ENCODE measurements at regions of chr2 and their contacts with region 1.

Region 1: DNA sequence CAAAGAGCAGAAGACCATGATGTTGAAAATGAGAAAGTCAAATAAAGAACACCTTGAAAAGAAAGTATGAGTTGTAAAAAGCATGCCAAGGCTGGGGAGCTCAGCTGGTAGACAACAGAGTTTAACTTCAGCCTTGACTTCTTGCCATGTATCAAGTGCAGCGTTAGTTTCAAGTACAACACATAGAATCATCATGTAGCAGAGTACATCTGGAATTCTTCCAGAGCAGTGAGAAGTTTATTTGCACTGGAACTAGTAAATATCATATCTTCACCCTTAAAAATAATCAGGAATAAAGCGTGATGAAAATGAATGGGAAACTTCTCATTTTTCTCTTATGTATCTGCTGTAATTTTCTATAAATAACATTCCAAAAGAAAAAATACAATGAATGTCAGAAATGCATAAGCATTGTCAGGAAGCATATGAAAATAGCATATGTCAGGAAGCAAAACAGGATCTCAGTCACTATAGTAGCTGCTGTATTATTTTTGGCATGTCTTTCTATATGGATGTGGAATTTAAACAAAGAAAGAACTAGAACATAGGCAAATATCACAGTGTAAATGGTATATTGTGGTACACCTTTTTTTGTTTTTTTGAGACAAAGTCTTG is 10.1 kb upstream of the SULT1C4 start:
- DNase-seq: no peak
- H3K4me3 ChIP-seq: no peak overlapping the region
- H3K27ac ChIP-seq: no peak overlapping the region
- H3K27me3 ChIP-seq: no peaks in the 10 kb centered on the region
- CTCF ChIP-seq: no peak

Region 2: GRCh38 chr2:108215794-108216211 is 151.9 kb before region 1 on chr2:
- intact Hi-C with region 1: no loop called
- DNase-seq: no peak
- H3K4me3 ChIP-seq: no peak overlapping the region
- H3K27ac ChIP-seq: no peak overlapping the region
- H3K27me3 ChIP-seq: no peaks in the 10 kb centered on the region
- CTCF ChIP-seq: peak in 29 of 56 donors; percentile 8 to 48 (median 25)

Region 3: DNA sequence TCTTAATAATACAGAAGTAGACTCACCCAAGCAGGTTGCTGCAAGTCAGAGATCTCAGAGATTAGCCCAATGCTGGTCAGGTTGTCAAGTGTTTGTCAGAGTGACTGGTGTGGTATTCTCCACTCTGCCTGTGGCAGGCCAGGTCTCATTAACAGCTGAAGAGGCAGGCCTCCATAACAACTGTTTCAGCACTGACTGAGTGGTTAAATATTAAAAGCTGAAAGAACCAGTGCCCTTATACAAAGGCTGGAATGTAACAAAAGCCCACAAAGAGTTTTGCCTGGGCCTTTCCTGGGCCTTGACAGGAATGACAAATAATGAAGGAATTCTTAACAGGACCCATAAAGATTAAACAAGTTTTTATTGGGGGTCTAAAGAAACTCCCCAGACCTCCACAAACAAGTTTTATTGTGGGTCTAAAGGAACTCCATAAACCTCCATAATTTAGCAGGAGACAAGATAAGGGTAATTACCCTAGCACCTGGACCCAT is 52.2 kb before region 1 on chr2:
- intact Hi-C with region 1: loop called in 1 of 2 experiments (anchors 2 kb)
- DNase-seq: no peak
- H3K4me3 ChIP-seq: no peak overlapping the region
- H3K27ac ChIP-seq: no peak overlapping the region
- H3K27me3 ChIP-seq: no peaks in the 10 kb centered on the region
- CTCF ChIP-seq: no peak